ENCODE measurements at regions of chr19 and their contacts with region 1.

Region 1: GRCh38 chr19:40285353-40286234 is 449 bp upstream of the AKT2 start:
- DNase-seq: peak; percentile 84 to 100 (median 99)
- ATAC-seq: peak; percentile 89
- H3K4me3 ChIP-seq: peak overlapping the region; percentile 81
- H3K4me3 Mint-ChIP-seq: peak overlapping the region; percentile 84 to 97 (median 92)
- H3K27ac ChIP-seq: peak overlapping the region; percentile 97
- H3K27ac Mint-ChIP-seq: peak overlapping the region; percentile 96 to 100 (median 99)
- H3K4me1 ChIP-seq: peaks cover 13 to 38% of the 10 kb centered on the region in 2 donors
- H3K4me1 Mint-ChIP-seq: peaks cover 24 to 59% (median 49%) of the 10 kb centered on the region in 7 donors
- H3K27me3 ChIP-seq: no peaks in the 10 kb centered on the region
- H3K27me3 Mint-ChIP-seq: peaks cover 0 to 2% (median 0%) of the 10 kb centered on the region in 5 donors

Region 2: GRCh38 chr19:39125554-39126311 is 1159.9 kb before region 1 on chr19 and contains the start of gene PAK4:
- CTCF ChIA-PET with region 1: no interaction called
- POLR2A ChIA-PET with region 1: no interaction called
- intact Hi-C with region 1: loop called in 1 of 2 experiments (anchors 10 kb)
- DNase-seq: peak; percentile 89 to 99 (median 92)
- ATAC-seq: peak; percentile 99
- H3K4me3 ChIP-seq: peak within 1 kb of the TSS; percentile 61
- H3K4me3 Mint-ChIP-seq: peak within 1 kb of the TSS; percentile 90 to 98 (median 94)
- H3K27ac ChIP-seq: peak within 1 kb of the TSS; percentile 90
- H3K27ac Mint-ChIP-seq: peak within 1 kb of the TSS; percentile 92 to 99 (median 97)
- H3K4me1 ChIP-seq: peaks cover 0 to 10% of the 10 kb centered on the region in 2 donors
- H3K4me1 Mint-ChIP-seq: peaks cover 26 to 50% (median 37%) of the 10 kb centered on the region in 7 donors
- H3K27me3 ChIP-seq: no peaks in the 10 kb centered on the region
- H3K27me3 Mint-ChIP-seq: peaks cover 0 to 7% (median 0%) of the 10 kb centered on the region in 5 donors
- total RNA-seq, gene PAK4: 9.3 to 17.5 (median 12.7) TPM

Region 3: DNA sequence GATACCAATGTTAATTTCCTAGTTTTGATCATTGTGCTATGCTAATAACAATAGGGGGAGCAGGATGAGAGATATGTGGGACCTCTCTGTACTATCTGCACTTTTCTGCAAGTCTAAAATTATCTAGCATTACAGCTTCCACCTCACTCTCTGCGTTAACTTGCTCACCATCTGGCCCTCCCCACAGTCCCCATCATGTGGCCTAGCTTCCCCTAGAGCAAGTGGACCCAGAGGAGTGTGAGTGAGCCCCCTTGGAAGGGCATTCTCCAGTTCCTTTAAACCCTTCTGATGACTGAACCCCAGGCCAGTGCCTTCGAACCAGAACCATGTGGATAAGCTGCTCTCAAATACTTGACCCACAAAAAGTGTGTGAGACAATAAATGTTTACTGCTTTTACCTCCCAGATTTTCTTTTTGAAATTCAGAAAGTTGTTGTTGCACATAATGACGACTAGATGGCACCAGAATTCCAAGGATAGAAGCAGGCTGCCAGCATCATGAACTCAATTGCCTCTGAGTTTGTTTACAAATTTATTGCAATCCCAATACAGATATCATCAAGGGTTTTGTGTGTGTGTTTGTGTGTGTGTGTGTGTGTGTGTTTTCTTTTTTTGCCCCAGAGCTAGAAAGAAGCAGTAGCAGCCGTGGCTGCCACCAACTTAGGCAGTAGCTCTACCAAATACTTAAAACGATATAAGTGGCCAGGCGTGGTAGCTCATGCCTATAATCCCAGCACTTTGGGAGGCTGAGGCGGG is 145.9 kb before region 1 on chr19:
- CTCF ChIA-PET with region 1: no interaction called
- POLR2A ChIA-PET with region 1: no interaction called
- intact Hi-C with region 1: loop called in 1 of 2 experiments (anchors 10 kb)
- DNase-seq: peak in 6 of 9 donors; percentile 38 to 63 (median 55)
- ATAC-seq: peak; percentile 43
- H3K4me3 ChIP-seq: no peak overlapping the region
- H3K4me3 Mint-ChIP-seq: peak overlapping the region in 1 of 10 donors; percentile 16
- H3K27ac ChIP-seq: no peak overlapping the region
- H3K27ac Mint-ChIP-seq: peak overlapping the region in 5 of 9 donors; percentile 0 to 59 (median 31)
- H3K4me1 ChIP-seq: peaks cover 16 to 18% of the 10 kb centered on the region in 2 donors
- H3K4me1 Mint-ChIP-seq: peaks cover 0 to 29% (median 18%) of the 10 kb centered on the region in 7 donors
- H3K27me3 ChIP-seq: no peaks in the 10 kb centered on the region
- H3K27me3 Mint-ChIP-seq: peaks cover 0 to 21% (median 11%) of the 10 kb centered on the region in 5 donors

Region 4: GRCh38 chr19:40274585-40275552 is 10.7 kb before region 1 on chr19:
- CTCF ChIA-PET with region 1: no interaction called
- POLR2A ChIA-PET with region 1: no interaction called
- intact Hi-C with region 1: loop called in 1 of 2 experiments (anchors 1 kb)
- DNase-seq: peak in 7 of 9 donors; percentile 11 to 56 (median 46)
- ATAC-seq: peak; percentile 73
- H3K4me3 ChIP-seq: peak overlapping the region; percentile 16
- H3K4me3 Mint-ChIP-seq: peak overlapping the region; percentile 64 to 90 (median 72)
- H3K27ac ChIP-seq: peak overlapping the region; percentile 21
- H3K27ac Mint-ChIP-seq: peak overlapping the region in 8 of 9 donors; percentile 52 to 91 (median 80)
- H3K4me1 ChIP-seq: peaks cover 9 to 44% of the 10 kb centered on the region in 2 donors
- H3K4me1 Mint-ChIP-seq: peaks cover 40 to 88% (median 67%) of the 10 kb centered on the region in 7 donors
- H3K27me3 ChIP-seq: no peaks in the 10 kb centered on the region
- H3K27me3 Mint-ChIP-seq: no peaks in the 10 kb centered on the region

Region 5: DNA sequence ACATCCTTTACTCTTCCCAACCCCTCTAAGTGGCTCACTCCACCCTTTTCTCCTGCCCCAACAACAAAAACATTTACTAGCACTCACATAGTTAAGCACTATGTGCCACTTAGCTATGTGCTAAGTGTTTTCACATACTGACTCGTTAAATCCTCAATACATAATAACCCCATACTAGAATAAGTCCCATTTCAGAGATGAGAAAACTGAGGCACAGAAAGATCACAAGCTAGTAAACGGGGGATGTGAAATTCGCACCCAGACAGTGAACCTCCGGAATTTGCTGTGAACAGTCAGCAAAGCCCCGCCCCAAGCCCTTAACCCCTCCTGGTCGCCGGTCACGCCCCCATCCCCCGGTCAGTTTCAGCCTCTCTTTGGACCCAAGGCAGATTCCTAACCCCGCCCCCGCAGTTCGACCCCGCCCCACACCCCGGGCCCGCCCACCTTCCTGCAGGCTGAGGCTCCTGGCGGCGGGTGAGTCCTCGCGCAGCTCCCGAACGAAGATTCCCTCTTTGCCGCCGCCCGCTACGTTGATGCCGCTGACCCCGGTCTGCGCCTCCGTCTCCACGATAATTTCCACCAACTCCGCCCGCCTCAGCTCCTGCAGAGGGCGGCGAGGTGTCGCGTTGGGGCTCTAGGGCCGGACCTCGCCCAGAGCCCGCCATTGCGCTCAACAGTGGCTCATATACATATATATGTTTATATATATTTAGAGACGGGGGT is 117.8 kb after region 1 on chr19:
- CTCF ChIA-PET with region 1: no interaction called
- POLR2A ChIA-PET with region 1: no interaction called
- intact Hi-C with region 1: loop called in 1 of 2 experiments (anchors 1 kb)
- DNase-seq: peak; percentile 54 to 84 (median 69)
- ATAC-seq: peak; percentile 80
- H3K4me3 ChIP-seq: peak overlapping the region; percentile 74
- H3K4me3 Mint-ChIP-seq: peak overlapping the region; percentile 78 to 98 (median 93)
- H3K27ac ChIP-seq: peak overlapping the region; percentile 79
- H3K27ac Mint-ChIP-seq: peak overlapping the region; percentile 75 to 93 (median 86)
- H3K4me1 ChIP-seq: peaks cover 5 to 12% of the 10 kb centered on the region in 2 donors
- H3K4me1 Mint-ChIP-seq: peaks cover 22 to 42% (median 36%) of the 10 kb centered on the region in 7 donors
- H3K27me3 ChIP-seq: no peaks in the 10 kb centered on the region
- H3K27me3 Mint-ChIP-seq: peaks cover 0 to 6% (median 0%) of the 10 kb centered on the region in 5 donors

Region 6: GRCh38 chr19:40570313-40571004 is 284.9 kb after region 1 on chr19:
- CTCF ChIA-PET with region 1: no interaction called
- POLR2A ChIA-PET with region 1: no interaction called
- intact Hi-C with region 1: loop called in 1 of 2 experiments (anchors 2 kb)
- DNase-seq: peak; percentile 90 to 97 (median 96)
- ATAC-seq: peak; percentile 94
- H3K4me3 ChIP-seq: peak overlapping the region; percentile 45
- H3K4me3 Mint-ChIP-seq: peak overlapping the region; percentile 50 to 85 (median 82)
- H3K27ac ChIP-seq: no peak overlapping the region
- H3K27ac Mint-ChIP-seq: peak overlapping the region; percentile 55 to 93 (median 81)
- H3K4me1 ChIP-seq: peaks cover 9 to 13% of the 10 kb centered on the region in 2 donors
- H3K4me1 Mint-ChIP-seq: peaks cover 10 to 27% (median 19%) of the 10 kb centered on the region in 7 donors
- H3K27me3 ChIP-seq: no peaks in the 10 kb centered on the region
- H3K27me3 Mint-ChIP-seq: peaks cover 9 to 41% (median 17%) of the 10 kb centered on the region in 5 donors

Measured in naive thymus-derived CD4-positive, alpha-beta T cell (primary cell).